GM10248 (cell line): ENCODE measurements at regions of chr15 and their contacts with region 1.

Region 1: GRCh38 chr15:75042730-75043508 is 19.5 kb downstream of the PPCDC start:
- DNase-seq: peak; percentile 89
- CTCF ChIP-seq: peak; percentile 88

Region 2: GRCh38 chr15:75069301-75069925 is 26.5 kb after region 1 on chr15:
- CTCF ChIA-PET with region 1: interaction called, 17 read pairs
- POLR2A ChIA-PET with region 1: interaction called, 3 read pairs
- DNase-seq: peak; percentile 83
- CTCF ChIP-seq: no peak

Region 3: DNA sequence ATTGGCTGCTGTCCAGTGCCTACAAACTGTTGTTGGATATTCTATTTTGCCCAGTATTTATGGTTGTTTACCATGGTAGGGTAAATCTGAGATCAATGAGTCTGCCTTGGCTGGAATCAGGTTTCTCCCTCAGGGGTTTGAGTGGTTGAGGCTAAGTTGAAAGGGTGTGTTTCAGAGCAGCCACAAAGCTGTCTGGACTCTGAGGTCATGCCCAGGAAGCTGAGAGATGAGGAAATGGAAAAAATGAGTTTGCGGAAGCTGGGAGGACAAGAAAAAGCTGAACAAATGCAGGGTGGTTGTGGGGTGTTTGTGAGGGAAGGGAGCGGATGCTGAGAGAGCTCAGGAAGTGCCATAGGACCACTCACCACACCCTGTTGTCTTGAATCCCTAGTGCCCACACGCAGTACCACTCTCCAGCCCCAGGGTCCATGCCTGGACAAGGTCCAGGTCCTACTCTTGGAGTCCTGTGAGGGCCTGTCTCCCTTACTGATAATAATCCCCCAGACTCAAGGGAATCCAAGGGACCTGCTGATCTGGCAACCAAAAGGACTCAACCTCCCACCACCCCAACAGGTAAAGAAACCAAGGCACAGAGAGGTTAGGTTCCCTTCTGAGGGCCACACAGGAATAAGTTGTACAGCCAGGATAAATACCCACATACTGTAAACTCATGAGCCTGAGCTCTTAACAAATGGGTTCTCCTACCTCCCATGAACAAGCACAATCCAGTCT is 62.1 kb after region 1 on chr15:
- CTCF ChIA-PET with region 1: interaction called, 52 read pairs
- POLR2A ChIA-PET with region 1: interaction called, 11 read pairs
- DNase-seq: peak; percentile 83
- CTCF ChIP-seq: no peak

Region 4: DNA sequence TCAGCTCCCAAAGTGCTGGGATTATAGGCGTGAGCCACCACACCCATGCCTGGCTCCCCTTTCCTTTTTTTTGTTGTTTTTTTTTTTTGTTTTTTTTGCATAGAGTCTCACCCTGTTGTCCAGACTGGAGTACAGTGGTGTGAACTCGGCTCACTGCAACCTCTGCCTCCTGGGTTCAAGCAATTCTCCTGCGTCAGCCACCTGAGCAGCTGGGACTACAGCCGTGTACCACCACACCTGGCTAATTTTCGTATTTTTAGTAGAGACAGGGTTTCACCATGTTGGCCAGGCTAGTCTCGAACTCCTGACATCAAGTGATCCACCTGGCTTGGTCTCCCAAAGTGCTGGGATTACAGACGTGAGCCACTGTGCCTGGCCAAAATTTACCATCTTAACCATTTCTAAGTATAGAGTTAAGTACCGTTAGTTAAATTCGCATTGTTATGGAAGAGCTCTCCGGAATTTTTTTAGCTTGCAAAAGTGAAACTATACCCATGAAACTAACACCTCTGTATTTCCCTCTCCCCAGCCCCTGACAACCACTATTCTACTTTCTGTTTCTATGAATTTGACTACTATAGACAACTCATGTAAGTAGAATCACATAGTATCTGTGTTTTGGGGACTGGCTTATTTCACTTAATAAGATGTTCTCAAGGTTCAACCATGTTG is 87.8 kb after region 1 on chr15:
- CTCF ChIA-PET with region 1: interaction called, 41 read pairs
- POLR2A ChIA-PET with region 1: interaction called, 6 read pairs
- DNase-seq: peak; percentile 59
- CTCF ChIP-seq: no peak

Region 5: DNA sequence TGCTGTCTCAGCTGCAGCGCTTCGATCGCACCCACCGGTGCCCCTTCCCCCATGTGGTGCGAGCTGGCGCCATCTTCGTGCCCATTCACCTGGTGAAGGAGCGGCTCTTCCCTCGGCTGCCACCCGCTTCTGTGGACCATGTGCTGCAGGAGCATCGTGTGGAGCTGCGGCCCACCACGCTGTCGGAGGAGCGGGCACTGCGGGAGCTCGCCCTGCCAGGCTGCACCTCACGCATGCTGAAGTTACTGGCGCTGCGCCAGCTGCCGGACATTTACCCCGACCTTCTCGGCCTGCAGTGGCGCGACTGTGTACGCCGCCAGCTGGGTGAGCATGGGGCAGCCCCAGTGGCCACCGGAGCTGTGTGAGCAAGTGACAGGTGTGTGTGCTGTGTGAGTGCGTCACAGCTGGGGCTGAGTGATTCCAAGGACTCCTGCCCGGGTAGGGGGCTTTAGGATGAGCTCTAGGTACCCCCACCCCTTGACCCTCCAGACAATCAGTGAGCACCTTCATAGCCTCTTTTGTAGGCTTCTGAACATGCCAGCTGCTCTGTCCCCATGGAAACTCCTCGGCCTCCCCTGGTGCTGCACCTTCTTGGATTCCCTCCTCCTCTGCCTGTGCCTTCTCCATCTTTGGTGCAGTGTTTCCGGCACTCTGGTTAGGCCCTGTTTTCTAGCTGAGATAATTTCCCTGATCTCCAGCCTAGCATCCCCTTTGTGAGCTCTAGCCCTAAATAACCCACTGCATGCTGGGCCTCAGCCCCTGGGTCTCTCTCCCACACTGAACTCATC is 165.8 kb after region 1 on chr15:
- CTCF ChIA-PET with region 1: interaction called, 54 read pairs
- POLR2A ChIA-PET with region 1: interaction called, 11 read pairs
- DNase-seq: no peak
- CTCF ChIP-seq: no peak